Esophagus muscularis mucosa (tissue), 4 donors: ENCODE measurements at regions of chr3 and their contacts with region 1.

Region 1: GRCh38 chr3:194592798-194593752 is 40.1 kb downstream of the TMEM44 start:
- DNase-seq: no peak
- H3K4me3 ChIP-seq: no peak overlapping the region
- H3K27ac ChIP-seq: no peak overlapping the region
- H3K4me1 ChIP-seq: no peaks in the 10 kb centered on the region
- H3K27me3 ChIP-seq: no peaks in the 10 kb centered on the region
- CTCF ChIP-seq: no peak
- EP300 ChIP-seq: no peak
- POLR2A ChIP-seq: no peak

Region 2: GRCh38 chr3:194158922-194159439 is 434.1 kb before region 1 on chr3:
- intact Hi-C with region 1: no loop called
- DNase-seq: no peak
- H3K4me3 ChIP-seq: no peak overlapping the region
- H3K27ac ChIP-seq: no peak overlapping the region
- H3K4me1 ChIP-seq: no peaks in the 10 kb centered on the region
- H3K27me3 ChIP-seq: no peaks in the 10 kb centered on the region
- CTCF ChIP-seq: no peak
- EP300 ChIP-seq: no peak
- POLR2A ChIP-seq: no peak

Region 3: DNA sequence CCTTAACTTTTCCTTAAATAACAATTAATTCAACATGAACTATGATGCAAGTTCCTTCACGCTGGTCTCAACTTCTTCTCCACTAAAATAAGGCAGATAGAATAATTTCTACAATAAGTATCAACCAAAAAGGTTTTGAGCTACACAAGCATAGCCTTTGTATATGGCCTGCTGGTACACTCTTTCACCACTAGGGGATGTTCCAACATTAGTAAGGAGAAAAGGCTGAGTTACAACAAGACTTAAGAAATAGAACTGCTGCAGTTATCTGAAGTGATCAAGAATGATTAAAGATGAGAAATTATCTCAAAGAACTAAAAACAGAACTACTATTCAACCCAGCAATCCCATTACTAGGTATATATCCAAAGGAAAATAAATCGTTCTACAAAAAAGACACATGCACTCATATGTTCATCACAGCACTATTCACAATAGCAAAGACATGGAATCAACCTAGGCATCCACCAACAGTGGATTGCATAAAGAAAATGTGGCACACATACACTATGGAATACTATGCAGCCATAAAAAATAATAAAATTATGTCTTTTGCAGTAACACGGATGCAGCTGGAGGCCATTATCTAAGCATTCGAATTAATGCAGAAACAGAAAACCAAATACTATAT is 120.7 kb before region 1 on chr3:
- intact Hi-C with region 1: loop called (anchors 2 kb)
- DNase-seq: no peak
- H3K4me3 ChIP-seq: no peak overlapping the region
- H3K27ac ChIP-seq: no peak overlapping the region
- H3K4me1 ChIP-seq: peaks cover 14 to 51% (median 29%) of the 10 kb centered on the region in 4 donors
- H3K27me3 ChIP-seq: no peaks in the 10 kb centered on the region
- CTCF ChIP-seq: peak in 2 of 3 experiments; percentile 96
- EP300 ChIP-seq: no peak
- POLR2A ChIP-seq: no peak

Region 4: DNA sequence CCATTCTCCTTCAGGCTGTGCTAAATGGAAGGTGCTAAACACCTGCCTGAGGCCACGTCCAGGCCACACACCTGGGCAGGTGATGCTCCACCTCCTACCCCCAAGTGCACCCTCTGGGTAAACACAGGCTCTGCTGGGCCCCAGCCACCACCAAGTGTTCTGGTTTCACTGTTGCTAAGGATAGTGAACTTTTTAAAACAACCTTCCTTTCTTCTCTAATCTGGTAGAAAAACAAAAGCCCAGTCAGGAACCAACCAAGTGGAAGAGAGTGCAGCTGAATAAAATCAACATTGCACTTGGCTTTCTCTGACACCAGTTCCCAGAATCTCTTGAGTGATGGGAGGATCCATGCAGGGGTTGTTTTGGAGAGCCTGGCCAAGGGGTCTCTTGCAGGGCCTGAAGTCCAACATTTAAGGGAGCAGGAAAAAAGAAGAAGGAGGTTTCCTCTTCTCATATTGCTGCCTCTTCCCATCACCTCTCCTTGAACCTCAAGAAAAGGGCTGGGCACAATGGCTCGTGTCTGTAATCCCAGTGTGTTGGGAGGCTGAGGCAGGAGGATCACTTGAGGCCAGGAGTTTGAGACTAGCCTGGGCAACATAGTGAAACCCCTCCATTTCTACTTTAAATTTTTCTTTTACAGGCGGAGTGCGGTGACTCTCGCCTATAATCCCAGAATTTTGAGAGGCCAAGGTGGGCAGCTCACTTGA is 80.0 kb before region 1 on chr3:
- intact Hi-C with region 1: no loop called
- DNase-seq: no peak
- H3K4me3 ChIP-seq: no peak overlapping the region
- H3K27ac ChIP-seq: no peak overlapping the region
- H3K4me1 ChIP-seq: no peaks in the 10 kb centered on the region
- H3K27me3 ChIP-seq: no peaks in the 10 kb centered on the region
- CTCF ChIP-seq: no peak
- EP300 ChIP-seq: no peak
- POLR2A ChIP-seq: no peak

Region 5: DNA sequence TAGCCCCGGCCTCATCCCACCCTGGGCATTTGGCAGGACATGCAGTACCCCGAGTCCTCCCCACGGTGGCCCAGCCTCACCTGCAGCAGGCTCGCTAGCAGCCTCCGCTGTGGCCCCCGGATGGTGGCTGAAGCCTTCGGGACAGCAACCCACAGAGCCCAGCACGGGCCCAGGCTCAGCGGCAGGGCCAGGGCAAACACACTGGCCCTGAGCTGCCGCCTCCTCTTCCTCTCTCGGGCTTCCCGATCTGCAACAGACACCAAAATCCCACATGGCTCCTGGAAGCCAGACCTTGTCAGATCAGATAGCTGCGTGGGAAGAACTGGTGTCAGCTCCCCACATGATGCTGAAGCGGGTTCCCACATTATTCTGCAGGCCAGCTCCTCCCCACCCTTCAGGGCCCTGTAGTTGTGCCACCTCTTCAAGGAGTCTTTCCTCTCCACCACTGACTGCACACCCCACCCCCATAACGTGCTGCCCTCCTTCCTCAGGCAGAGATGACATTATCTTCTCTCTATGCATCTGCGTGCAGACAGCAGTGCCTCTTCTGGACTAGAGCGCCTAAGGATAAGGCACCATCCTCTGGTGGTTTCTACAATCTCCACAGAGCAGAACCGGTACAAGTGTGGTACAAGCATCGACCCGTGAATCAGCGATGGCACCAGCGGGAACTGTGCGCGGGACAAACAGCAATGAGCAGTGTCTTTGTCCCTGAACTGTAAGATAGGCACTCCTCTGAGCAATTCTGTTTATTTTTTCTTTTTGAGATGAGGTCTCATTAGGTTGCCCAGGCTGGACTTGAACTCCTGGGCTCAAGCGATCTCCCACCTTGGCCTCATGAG is 30.6 kb after region 1 on chr3:
- intact Hi-C with region 1: no loop called
- DNase-seq: no peak
- H3K4me3 ChIP-seq: no peak overlapping the region
- H3K27ac ChIP-seq: no peak overlapping the region
- H3K4me1 ChIP-seq: no peaks in the 10 kb centered on the region
- H3K27me3 ChIP-seq: no peaks in the 10 kb centered on the region
- CTCF ChIP-seq: no peak
- EP300 ChIP-seq: no peak
- POLR2A ChIP-seq: no peak